GM18951 (cell line): ENCODE measurements at regions of chr22 and their contacts with region 1.

Region 1: DNA sequence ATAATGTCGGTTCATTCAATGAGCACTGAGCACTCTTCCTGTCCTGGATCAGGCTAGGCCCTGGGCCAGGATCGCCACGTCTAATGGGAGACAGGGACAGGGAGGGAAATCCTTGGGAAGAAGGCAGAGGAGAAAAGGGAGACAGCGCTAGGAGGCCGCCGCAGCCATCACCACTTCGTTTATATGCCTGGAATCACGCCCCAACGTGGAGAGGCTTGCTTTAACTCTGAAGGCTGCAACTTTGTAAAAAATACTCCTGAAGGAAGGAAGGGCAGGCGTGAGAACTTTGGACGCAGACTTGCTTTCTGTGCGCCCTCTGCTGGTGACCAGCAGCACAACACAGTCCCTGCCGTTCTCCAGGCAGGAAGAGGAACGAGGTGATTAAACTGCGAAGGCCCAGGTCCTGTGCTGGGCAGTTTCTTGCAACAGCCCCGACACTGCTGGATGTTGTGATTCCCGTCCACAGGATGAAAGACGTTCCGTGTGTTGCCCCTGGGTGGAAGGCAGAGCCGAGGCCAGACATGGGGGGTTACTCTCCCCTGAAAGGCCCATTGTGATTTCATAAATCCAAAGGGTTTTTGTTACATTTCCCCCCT is 22.1 kb downstream of the RIBC2 start:
- POLR2A ChIP-seq: no peak

Region 2: DNA sequence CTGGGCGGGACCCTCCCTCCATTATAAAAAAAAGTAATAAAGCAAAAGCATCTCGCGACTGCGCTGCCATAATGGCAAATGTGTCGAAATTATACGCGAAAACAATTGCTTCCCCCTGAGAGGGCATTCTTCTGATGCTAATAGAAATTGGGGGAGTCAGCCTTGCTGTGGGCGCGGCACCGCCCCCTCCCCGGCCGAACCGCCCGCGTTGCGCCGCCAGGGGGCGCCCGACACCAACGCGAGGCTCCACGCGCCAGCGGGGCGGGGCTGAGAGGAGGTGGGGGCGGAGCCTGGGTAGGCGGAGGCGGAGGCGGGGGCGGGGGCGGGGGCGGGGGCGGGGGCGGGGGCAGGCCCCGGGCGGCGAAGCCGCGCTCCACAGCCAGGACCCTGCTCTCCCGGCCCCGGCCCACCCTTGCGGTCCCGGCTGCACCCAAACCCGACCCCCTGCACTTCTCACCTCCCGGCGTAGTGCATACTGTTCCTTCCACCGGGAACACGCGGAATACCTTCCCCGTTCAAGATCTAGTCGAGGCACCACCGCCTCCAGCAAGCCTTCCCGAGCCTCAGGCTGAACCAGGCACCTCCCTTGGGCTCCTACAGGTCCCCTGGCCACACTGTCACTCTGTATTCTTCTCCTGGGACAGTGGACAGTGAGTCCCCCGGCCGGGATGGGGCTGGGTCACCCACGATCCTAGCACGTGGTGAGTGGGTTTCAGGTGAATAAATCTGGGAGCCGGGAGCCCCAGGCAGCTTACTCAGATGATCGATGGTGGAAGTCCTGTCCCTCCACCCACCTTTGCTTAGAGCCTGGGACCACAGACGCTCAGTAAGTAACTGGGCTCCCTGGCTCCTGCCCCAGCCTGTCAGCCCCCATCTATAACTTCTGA is 166.4 kb before region 1 on chr22:
- in situ Hi-C with region 1: loop called (anchors 10 kb)
- POLR2A ChIP-seq: no peak